ENCODE measurements at regions of chr5 and their contacts with region 1.

Region 1: GRCh38 chr5:143824851-143825720 is 13.1 kb downstream of the HMHB1 start:
- DNase-seq: peak; percentile 91
- ATAC-seq: peak; percentile 70
- H3K4me3 Mint-ChIP-seq: no peak overlapping the region
- H3K27ac Mint-ChIP-seq: no peak overlapping the region
- H3K4me1 Mint-ChIP-seq: peaks cover 18% of the 10 kb centered on the region
- H3K27me3 Mint-ChIP-seq: peaks cover 2% of the 10 kb centered on the region

Region 2: GRCh38 chr5:143002459-143003328 is 822.4 kb before region 1 on chr5:
- CTCF ChIA-PET with region 1: interaction called, 15 read pairs
- POLR2A ChIA-PET with region 1: no interaction called
- intact Hi-C with region 1: loop called (anchors 2 kb)
- DNase-seq: peak; percentile 78
- ATAC-seq: peak; percentile 92
- H3K4me3 Mint-ChIP-seq: peak overlapping the region; percentile 17
- H3K27ac Mint-ChIP-seq: peak overlapping the region; percentile 93
- H3K4me1 Mint-ChIP-seq: peaks cover 50% of the 10 kb centered on the region
- H3K27me3 Mint-ChIP-seq: no peaks in the 10 kb centered on the region

Region 3: DNA sequence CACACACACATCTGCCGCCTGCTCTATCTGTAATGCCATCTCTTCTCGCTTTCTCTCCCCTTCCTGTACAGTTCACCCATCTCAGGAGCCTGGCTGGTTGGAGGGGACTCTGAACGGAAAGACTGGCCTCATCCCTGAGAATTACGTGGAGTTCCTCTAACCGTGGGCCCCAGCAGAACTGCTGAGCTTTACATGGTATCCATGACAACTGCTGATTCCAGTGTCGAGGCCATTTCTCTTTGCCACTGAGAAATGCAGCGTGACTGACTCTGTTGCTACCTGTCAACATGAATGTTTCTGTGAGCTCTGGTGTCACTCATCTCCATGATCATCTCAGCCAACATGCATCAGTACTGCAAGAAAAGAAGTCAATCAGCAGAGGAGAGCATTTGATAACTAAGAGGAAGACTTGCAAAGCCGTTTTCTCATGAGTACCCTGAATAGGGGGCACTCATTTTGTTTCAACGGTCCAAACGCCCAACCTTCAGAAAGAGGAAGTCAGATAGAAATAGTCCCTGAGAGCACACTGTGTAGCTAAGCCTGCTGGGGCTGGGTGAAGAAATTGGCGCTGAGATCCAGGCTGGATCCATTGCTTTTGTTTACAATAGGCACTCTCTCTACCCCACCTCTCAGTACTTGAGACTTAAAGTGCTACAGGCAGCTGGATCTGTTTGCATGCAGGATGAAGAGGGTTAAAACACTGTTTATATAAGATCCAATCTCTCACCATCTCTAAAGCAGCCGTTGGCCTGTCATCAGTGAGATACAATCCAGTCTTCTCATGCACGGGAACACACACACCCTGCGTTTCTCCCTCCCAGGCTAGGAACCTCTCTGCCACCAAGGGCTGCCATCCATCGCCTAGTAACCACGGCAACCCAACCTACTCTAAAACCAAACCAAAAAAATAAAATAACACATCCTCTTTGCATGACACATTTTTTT is 602.5 kb before region 1 on chr5:
- CTCF ChIA-PET with region 1: no interaction called
- POLR2A ChIA-PET with region 1: no interaction called
- intact Hi-C with region 1: loop called (anchors 5 to 10 kb)
- DNase-seq: peak; percentile 62
- ATAC-seq: peak; percentile 68
- H3K4me3 Mint-ChIP-seq: peak overlapping the region; percentile 25
- H3K27ac Mint-ChIP-seq: peak overlapping the region; percentile 92
- H3K4me1 Mint-ChIP-seq: peaks cover 46% of the 10 kb centered on the region
- H3K27me3 Mint-ChIP-seq: no peaks in the 10 kb centered on the region

Region 4: GRCh38 chr5:143435210-143435657 is 389.9 kb before region 1 on chr5:
- CTCF ChIA-PET with region 1: interaction called, 3 read pairs
- POLR2A ChIA-PET with region 1: no interaction called
- intact Hi-C with region 1: loop called (anchors 10 kb)
- DNase-seq: peak; percentile 47
- ATAC-seq: peak; percentile 39
- H3K4me3 Mint-ChIP-seq: peak overlapping the region; percentile 76
- H3K27ac Mint-ChIP-seq: peak overlapping the region; percentile 98
- H3K4me1 Mint-ChIP-seq: peaks cover 69% of the 10 kb centered on the region
- H3K27me3 Mint-ChIP-seq: no peaks in the 10 kb centered on the region

Region 5: DNA sequence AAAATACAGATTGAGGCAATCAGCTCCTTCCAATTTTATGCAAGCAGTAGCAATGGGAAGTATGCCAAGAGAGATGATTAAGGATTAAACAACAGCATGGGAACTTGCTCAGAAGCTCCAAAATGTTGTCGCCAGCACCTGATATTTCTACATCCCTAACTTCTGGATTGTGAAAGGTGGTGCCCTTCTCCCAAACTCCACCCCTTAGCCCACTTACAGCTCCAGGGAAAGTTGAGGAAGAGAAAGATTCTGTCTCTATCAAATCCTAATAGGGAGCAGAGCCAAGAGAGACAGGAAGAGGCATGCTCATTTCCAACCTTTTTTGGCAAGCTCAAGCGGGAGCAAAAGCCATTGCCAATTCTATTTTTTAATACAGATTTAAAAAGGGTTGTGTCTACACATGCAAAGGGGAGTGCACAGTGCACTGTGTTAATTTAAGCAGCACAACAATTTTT is 329.2 kb before region 1 on chr5:
- CTCF ChIA-PET with region 1: no interaction called
- POLR2A ChIA-PET with region 1: no interaction called
- intact Hi-C with region 1: no loop called
- DNase-seq: no peak
- ATAC-seq: no peak
- H3K4me3 Mint-ChIP-seq: no peak overlapping the region
- H3K27ac Mint-ChIP-seq: no peak overlapping the region
- H3K4me1 Mint-ChIP-seq: no peaks in the 10 kb centered on the region
- H3K27me3 Mint-ChIP-seq: no peaks in the 10 kb centered on the region

Region 6: DNA sequence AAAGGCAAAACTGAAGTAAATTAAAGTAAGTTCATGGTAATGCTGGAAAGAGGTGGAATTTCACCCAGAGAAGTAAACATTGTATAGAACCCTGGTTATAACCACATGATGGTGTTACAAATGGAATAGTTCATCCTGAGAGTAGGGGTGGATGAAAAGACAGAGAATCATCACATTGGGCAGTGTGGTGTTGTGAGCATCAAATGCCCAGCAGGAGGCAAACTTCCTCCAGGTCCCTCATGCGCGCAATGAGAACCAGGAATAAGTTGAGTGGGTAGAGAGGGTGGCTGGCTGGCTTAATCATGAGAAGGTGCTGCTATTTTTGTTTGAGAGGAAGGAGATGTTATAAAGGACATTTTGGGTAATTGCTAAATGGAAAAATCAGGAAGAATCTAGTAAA is 176.4 kb before region 1 on chr5:
- CTCF ChIA-PET with region 1: interaction called, 3 read pairs
- POLR2A ChIA-PET with region 1: no interaction called
- intact Hi-C with region 1: loop called (anchors 1 to 2 kb)
- DNase-seq: peak; percentile 26
- ATAC-seq: no peak
- H3K4me3 Mint-ChIP-seq: no peak overlapping the region
- H3K27ac Mint-ChIP-seq: no peak overlapping the region
- H3K4me1 Mint-ChIP-seq: peaks cover 17% of the 10 kb centered on the region
- H3K27me3 Mint-ChIP-seq: no peaks in the 10 kb centered on the region

Region 7: GRCh38 chr5:143968011-143968878 is 143.2 kb after region 1 on chr5:
- CTCF ChIA-PET with region 1: interaction called, 6 read pairs
- POLR2A ChIA-PET with region 1: no interaction called
- intact Hi-C with region 1: loop called (anchors 5 to 10 kb)
- DNase-seq: peak; percentile 8
- ATAC-seq: peak; percentile 80
- H3K4me3 Mint-ChIP-seq: no peak overlapping the region
- H3K27ac Mint-ChIP-seq: no peak overlapping the region
- H3K4me1 Mint-ChIP-seq: no peaks in the 10 kb centered on the region
- H3K27me3 Mint-ChIP-seq: no peaks in the 10 kb centered on the region

Region 8: GRCh38 chr5:144191998-144192397 is 366.9 kb after region 1 on chr5:
- CTCF ChIA-PET with region 1: no interaction called
- POLR2A ChIA-PET with region 1: no interaction called
- intact Hi-C with region 1: loop called (anchors 1 to 2 kb)
- DNase-seq: peak; percentile 19
- ATAC-seq: peak; percentile 74
- H3K4me3 Mint-ChIP-seq: no peak overlapping the region
- H3K27ac Mint-ChIP-seq: no peak overlapping the region
- H3K4me1 Mint-ChIP-seq: peaks cover 22% of the 10 kb centered on the region
- H3K27me3 Mint-ChIP-seq: no peaks in the 10 kb centered on the region